Activated naive CD4-positive, alpha-beta T cell treated with anti-CD3 and anti-CD28 coated beads, Interleukin-2, amount 10 ng/mL, durations not matched to agents 7 days and 5 days (primary cell): ENCODE measurements at regions of chr2 and their contacts with region 1.

Region 1: DNA sequence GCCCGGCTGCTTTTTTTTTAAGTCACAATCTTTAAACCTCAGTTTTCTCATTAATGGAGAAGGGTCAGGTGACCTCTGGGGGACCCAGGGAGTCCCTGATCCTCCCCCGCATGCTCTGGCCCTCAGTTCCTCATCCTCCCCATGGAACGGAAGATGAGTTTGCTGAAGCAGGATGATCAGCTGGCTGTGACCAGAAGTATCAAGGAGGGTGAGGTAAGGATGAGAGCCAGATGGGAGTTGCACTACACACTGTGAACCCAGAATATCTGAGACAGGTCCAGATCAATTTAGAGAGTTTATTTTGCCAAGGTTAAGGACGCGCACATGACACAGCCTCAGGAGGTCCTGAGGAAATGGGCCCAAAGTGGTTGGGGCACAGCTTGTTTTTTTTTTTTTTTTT is 3.8 kb downstream of the CATIP start:
- DNase-seq: no peak
- H3K4me3 Mint-ChIP-seq: no peak overlapping the region
- H3K27ac Mint-ChIP-seq: no peak overlapping the region
- H3K4me1 Mint-ChIP-seq: peaks cover 6% of the 10 kb centered on the region
- H3K27me3 Mint-ChIP-seq: peaks cover 40% of the 10 kb centered on the region

Region 2: GRCh38 chr2:218292048-218293014 is 68.1 kb before region 1 on chr2 and contains the start of gene TMBIM1:
- CTCF ChIA-PET with region 1: interaction called, 13 read pairs
- DNase-seq: peak; percentile 82
- H3K4me3 Mint-ChIP-seq: peak within 1 kb of the TSS; percentile 78
- H3K27ac Mint-ChIP-seq: peak within 1 kb of the TSS; percentile 88
- H3K4me1 Mint-ChIP-seq: peaks cover 69% of the 10 kb centered on the region
- H3K27me3 Mint-ChIP-seq: peaks cover 4% of the 10 kb centered on the region

Region 3: DNA sequence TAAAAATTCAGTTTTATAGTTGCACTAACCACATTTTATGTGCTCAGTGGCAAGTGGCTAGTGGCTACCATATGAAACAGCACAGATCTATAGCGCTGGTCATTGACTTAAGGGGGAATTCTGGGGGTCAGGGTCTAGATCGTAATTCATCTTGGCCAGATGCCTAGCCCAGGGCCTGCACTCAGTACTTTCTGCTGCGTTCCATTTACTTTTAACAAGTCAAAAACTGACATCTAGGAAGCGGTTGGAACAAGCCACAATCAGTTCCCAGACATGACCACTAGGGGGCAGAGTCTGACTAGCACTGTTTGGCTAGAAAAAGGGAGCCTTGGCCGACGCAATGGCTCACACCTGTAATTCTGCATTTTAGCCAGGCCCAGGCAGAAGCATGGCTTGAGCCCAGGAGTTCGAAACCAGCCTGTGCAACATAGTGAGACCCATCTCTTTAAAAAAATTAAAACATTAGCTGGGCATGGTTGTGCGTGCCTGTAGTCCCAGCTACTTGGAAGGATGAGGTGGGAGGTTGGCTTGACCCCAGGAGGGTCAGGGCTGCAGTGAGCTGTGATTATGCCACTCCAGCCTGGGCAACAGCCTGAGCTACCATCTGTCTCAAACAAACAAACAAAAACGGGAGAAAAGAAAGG is 59.1 kb before region 1 on chr2:
- CTCF ChIA-PET with region 1: interaction called, 103 read pairs
- DNase-seq: peak; percentile 94
- H3K4me3 Mint-ChIP-seq: no peak overlapping the region
- H3K27ac Mint-ChIP-seq: peak overlapping the region; percentile 4
- H3K4me1 Mint-ChIP-seq: peaks cover 6% of the 10 kb centered on the region
- H3K27me3 Mint-ChIP-seq: peaks cover 32% of the 10 kb centered on the region

Region 4: DNA sequence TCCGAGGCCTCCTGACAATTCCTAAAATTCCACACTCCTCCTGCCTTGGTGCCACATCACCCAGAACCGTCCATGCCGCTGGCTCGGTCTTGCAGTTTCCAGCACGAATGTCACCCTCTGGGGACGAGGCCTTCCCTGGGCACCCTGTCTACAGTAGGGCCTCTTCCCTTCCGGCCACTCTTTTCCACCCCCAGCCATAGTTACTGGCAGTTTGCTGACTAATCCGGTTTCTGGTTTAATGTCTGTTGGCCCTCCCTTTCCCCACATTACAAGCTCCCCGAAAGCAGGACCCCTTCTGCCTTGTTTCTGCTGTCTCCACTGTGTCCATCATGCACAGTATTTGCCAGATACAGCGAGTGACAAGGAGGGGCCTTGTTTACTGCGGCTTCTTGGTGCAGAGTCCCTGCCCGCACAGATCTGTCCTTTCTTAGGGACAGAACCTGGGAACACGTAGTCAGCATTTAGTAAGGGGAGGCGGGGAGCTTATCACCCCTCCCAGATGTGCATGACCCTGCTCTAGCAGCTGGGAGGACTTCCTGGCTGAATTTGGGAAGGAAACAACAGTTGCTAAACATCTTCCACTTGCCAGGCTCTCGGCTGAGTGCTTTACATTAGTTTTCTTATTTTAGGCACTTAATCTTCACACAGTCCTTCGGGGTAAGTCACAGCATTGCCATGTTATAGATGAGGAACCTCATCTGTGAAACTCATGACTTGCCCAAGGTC is 27.4 kb before region 1 on chr2:
- CTCF ChIA-PET with region 1: interaction called, 10 read pairs
- DNase-seq: no peak
- H3K4me3 Mint-ChIP-seq: no peak overlapping the region
- H3K27ac Mint-ChIP-seq: no peak overlapping the region
- H3K4me1 Mint-ChIP-seq: no peaks in the 10 kb centered on the region
- H3K27me3 Mint-ChIP-seq: peaks cover 23% of the 10 kb centered on the region

Region 5: DNA sequence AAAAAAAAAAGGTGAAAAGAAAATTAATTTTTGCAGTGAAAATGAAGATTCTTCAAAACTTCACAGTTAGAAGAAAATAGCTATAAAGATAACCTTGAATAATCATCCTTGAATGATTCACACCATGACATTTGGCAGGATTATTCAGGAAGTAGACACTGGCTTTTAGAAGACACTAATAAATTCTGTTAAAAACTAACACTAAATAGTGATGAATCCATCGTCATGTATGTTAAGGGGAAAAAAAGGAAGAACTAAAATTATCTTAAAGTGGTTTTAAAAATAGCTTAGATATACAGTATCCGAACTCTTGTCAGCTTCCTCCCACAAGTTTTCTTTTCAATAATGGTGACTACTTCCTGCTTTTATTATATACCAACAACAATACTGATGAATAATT is 197.5 kb after region 1 on chr2:
- CTCF ChIA-PET with region 1: no interaction called
- DNase-seq: no peak
- H3K4me3 Mint-ChIP-seq: no peak overlapping the region
- H3K27ac Mint-ChIP-seq: no peak overlapping the region
- H3K4me1 Mint-ChIP-seq: peaks cover 4% of the 10 kb centered on the region
- H3K27me3 Mint-ChIP-seq: no peaks in the 10 kb centered on the region